Activated naive CD4-positive, alpha-beta T cell treated with anti-CD3 and anti-CD28 coated beads for 36 hours (primary cell): ENCODE measurements at regions of chr1 and their contacts with region 1.

Region 1: GRCh38 chr1:10209905-10210810 is at the start of gene KIF1B:
- DNase-seq: peak; percentile 95
- H3K4me3 Mint-ChIP-seq: peak within 1 kb of the TSS; percentile 83
- H3K27ac Mint-ChIP-seq: peak within 1 kb of the TSS; percentile 69
- H3K4me1 Mint-ChIP-seq: peaks cover 29% of the 10 kb centered on the region
- H3K27me3 Mint-ChIP-seq: no peaks in the 10 kb centered on the region
- total RNA-seq, gene KIF1B: 6.1 to 6.2 TPM

Region 2: DNA sequence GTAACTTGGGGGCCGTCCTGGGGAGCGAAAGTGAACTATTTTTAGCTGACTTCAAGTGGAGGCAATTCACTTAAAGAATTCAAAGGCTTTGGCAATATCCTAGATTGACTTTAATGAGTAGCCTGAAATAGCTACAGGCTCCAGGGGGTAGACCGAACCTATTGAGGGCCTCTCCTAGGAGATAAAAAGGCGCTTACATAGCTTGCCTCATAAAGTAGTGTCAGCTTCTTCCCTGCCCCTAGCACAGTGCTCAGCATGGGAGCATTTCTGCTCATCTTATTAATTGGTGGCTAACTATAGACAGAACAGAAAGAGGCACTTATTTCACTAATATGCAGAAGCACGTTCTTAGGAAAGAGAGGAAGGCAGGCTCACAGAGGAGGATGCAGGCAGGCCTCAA is 287.8 kb before region 1 on chr1:
- CTCF ChIA-PET with region 1: no interaction called
- intact Hi-C with region 1: no loop called
- DNase-seq: no peak
- H3K4me3 Mint-ChIP-seq: no peak overlapping the region
- H3K27ac Mint-ChIP-seq: no peak overlapping the region
- H3K4me1 Mint-ChIP-seq: peaks cover 4% of the 10 kb centered on the region
- H3K27me3 Mint-ChIP-seq: no peaks in the 10 kb centered on the region

Region 3: GRCh38 chr1:10014016-10014415 is 196.1 kb before region 1 on chr1:
- CTCF ChIA-PET with region 1: no interaction called
- intact Hi-C with region 1: no loop called
- DNase-seq: no peak
- H3K4me3 Mint-ChIP-seq: no peak overlapping the region
- H3K27ac Mint-ChIP-seq: no peak overlapping the region
- H3K4me1 Mint-ChIP-seq: no peaks in the 10 kb centered on the region
- H3K27me3 Mint-ChIP-seq: no peaks in the 10 kb centered on the region

Region 4: GRCh38 chr1:10128101-10128765 is 81.9 kb before region 1 on chr1:
- CTCF ChIA-PET with region 1: no interaction called
- intact Hi-C with region 1: no loop called
- DNase-seq: no peak
- H3K4me3 Mint-ChIP-seq: no peak overlapping the region
- H3K27ac Mint-ChIP-seq: no peak overlapping the region
- H3K4me1 Mint-ChIP-seq: no peaks in the 10 kb centered on the region
- H3K27me3 Mint-ChIP-seq: no peaks in the 10 kb centered on the region

Region 5: DNA sequence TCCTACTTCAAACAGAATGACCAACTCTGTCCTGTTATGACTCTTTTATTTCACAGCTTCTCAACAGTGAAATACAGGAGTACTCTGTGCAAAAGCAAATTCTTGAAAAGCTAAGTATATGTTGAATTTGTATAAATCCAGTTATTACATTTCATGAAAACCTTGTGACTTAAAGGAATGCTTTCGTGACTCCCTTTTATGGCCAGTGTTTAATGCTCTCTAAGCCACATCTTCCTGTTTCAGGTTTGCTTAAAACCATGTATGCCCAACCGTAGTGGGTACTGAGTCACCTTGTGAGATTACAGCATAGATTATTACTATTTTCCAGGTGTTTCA is 40.0 kb before region 1 on chr1:
- CTCF ChIA-PET with region 1: interaction called, 8 read pairs
- intact Hi-C with region 1: loop called (anchors 1 kb)
- DNase-seq: peak; percentile 48
- H3K4me3 Mint-ChIP-seq: no peak overlapping the region
- H3K27ac Mint-ChIP-seq: peak overlapping the region; percentile 87
- H3K4me1 Mint-ChIP-seq: peaks cover 40% of the 10 kb centered on the region
- H3K27me3 Mint-ChIP-seq: no peaks in the 10 kb centered on the region

Region 6: DNA sequence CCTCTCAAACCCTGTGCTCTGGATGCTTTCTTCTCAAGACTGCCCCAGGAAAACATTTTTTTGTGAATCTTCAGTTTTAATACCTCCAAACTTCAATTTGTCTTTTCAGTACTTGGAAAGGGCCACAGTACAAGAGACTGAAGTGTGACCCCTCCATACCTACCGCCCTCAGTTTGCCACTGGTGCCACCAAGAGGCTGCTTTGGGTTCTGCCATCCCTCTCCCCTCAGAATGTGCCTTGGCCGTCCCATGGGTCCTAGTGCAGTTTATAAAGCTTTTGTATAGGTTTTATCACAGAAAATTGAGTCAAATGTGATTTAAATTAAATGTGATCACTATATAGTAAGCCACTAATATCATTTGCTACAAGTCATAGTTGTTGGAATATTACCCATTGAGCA is 127.9 kb after region 1 on chr1:
- CTCF ChIA-PET with region 1: interaction called, 30 read pairs
- intact Hi-C with region 1: loop called (anchors 1 kb)
- DNase-seq: peak; percentile 70
- H3K4me3 Mint-ChIP-seq: no peak overlapping the region
- H3K27ac Mint-ChIP-seq: no peak overlapping the region
- H3K4me1 Mint-ChIP-seq: no peaks in the 10 kb centered on the region
- H3K27me3 Mint-ChIP-seq: no peaks in the 10 kb centered on the region